Motor neuron (in vitro differentiated cells): ENCODE measurements at regions of chr1 and their contacts with region 1.

Region 1: GRCh38 chr1:95233737-95234500 is at the start of gene RWDD3:
- ATAC-seq: peak; percentile 93 to 97 (median 95)
- H3K4me3 ChIP-seq: peak within 1 kb of the TSS; percentile 58 to 86 (median 72)
- H3K27ac ChIP-seq: peak within 1 kb of the TSS; percentile 13 to 65
- H3K4me1 ChIP-seq: peaks cover 3 to 10% of the 10 kb centered on the region in 2 donors
- total RNA-seq, gene RWDD3: 10.9 to 33.6 (median 22.6) TPM

Region 2: GRCh38 chr1:94832446-94832845 is 401.5 kb before region 1 on chr1:
- in situ Hi-C with region 1: loop called in 1 of 9 experiments (anchors 25 kb)
- ATAC-seq: peak in 1 of 8 experiments; percentile 23
- H3K4me3 ChIP-seq: no peak overlapping the region
- H3K27ac ChIP-seq: no peak overlapping the region
- H3K4me1 ChIP-seq: peaks cover 0 to 9% of the 10 kb centered on the region in 2 donors

Region 3: DNA sequence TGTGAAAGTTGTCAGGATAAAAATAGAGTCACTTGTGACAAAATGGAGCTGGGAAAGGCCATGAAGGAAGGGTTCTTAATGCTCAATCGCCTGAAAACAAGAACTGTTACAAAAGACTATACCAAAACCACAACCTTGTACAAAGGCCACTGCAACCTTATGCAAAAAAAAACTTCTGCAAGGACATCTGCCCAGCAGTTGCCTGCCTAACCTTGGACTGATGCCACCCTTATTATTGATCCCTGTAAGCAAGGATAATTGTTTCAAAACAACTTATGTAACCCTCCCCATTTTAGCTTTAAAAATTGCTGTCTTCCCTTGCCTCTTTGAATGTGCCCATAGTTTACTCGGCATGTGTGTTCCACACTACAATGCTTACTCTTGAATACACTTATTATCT is 166.9 kb before region 1 on chr1:
- in situ Hi-C with region 1: loop called in 1 of 9 experiments (anchors 10 kb)
- ATAC-seq: no peak
- H3K4me3 ChIP-seq: no peak overlapping the region
- H3K27ac ChIP-seq: no peak overlapping the region
- H3K4me1 ChIP-seq: peaks cover 5 to 17% of the 10 kb centered on the region in 2 donors

Region 4: DNA sequence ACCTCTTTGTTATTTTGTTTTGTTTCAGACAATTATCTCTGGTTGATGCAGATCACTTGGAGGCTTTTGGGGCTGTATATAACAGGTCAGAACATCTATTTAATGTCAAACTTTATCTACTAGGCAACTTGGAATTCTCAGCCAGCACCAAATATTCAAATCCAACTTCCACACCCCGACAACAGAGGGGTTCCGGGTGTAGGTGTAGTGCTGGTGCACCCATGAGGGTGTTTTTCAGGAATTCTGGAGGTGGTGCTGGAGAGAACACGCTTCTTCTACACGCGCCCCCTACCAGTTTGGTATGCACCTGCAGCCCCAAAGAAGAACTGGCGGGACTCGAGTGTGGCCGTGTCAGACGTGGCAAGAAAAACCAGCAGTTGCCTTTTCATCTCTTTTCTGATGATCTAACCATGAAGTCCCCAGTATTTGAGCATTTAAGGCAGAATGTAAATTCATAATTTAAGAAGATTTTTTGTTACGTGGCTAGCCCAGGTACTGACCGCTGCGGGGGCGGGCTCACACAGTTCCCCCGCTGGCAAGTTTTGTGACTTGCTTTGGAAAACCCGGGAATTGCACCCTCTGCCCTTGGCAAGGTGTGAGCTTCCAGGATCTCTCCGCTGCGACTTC is 117.2 kb before region 1 on chr1:
- in situ Hi-C with region 1: loop called in 1 of 9 experiments (anchors 25 kb)
- ATAC-seq: peak; percentile 47 to 78 (median 74)
- H3K4me3 ChIP-seq: peak overlapping the region; percentile 62 to 92 (median 82)
- H3K27ac ChIP-seq: no peak overlapping the region
- H3K4me1 ChIP-seq: peaks cover 3 to 5% of the 10 kb centered on the region in 2 donors